B cell (primary cell): ENCODE measurements at regions of chr11 and their contacts with region 1.

Region 1: DNA sequence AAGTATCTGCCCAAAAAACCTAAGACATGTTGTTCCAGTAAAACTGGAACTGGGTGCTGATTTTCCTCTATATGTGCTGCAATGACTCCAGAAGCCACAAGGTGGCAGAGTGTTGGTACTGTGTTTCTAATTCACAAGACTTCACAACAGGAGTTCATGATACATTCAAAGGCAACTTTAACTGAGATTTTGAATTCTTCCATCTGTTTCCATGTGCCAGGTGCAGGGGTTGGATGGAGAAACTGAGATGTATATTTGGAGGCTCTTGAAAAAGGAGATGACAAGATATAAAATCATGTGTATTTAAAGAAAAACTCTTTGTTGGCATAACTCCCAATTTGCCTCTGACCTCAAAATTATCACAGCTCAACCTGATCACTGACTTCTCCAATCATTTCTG is 1098.6 kb upstream of the CCDC90B start:
- DNase-seq: peak; percentile 43
- ATAC-seq: peak; percentile 61
- H3K4me3 ChIP-seq: no peak overlapping the region
- H3K4me3 Mint-ChIP-seq: no peak overlapping the region
- H3K27ac ChIP-seq: no peak overlapping the region
- H3K27ac Mint-ChIP-seq: no peak overlapping the region
- H3K4me1 ChIP-seq: no peaks in the 10 kb centered on the region
- H3K4me1 Mint-ChIP-seq: no peaks in the 10 kb centered on the region
- H3K27me3 ChIP-seq: no peaks in the 10 kb centered on the region
- H3K27me3 Mint-ChIP-seq: peaks cover 3% of the 10 kb centered on the region
- CTCF ChIP-seq: peak; percentile 95

Region 2: DNA sequence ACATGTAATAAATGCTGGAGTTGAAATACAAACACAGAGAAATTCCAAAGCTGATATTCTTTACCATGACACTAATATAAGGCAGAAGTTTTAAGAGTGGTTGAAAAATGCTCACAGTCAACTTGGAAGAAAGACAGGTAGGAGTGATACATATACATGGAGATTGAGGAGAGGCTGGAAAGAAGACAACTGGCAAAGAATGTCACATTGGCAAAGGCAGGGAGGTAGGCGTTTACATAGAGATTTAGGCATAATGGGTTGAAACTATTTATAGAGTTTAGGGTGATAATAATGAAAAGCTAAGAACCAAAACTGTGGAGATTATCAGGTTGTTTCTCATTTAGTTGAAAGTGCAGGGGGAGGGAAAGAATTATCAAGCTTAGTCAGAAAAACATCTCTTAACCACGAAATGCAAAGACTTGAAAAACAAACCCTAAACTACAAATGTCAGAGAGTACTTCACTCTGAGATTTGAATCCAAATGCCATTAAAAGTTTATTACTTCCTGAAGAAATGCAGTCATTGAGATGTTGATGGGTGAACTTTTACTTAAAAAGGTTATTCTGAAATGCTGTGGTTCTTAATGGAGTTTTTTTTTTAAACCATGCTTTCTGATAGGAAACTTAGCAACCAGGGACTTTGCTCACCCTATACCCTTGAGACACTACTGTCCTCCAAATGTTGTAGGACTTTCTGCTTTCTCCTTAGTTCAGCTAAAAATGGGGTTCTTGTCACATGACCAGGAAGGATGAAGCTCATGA is 960.2 kb before region 1 on chr11:
- CTCF ChIA-PET with region 1: no interaction called
- POLR2A ChIA-PET with region 1: no interaction called
- intact Hi-C with region 1: no loop called
- DNase-seq: no peak
- ATAC-seq: no peak
- H3K4me3 ChIP-seq: no peak overlapping the region
- H3K4me3 Mint-ChIP-seq: no peak overlapping the region
- H3K27ac ChIP-seq: no peak overlapping the region
- H3K27ac Mint-ChIP-seq: no peak overlapping the region
- H3K4me1 ChIP-seq: no peaks in the 10 kb centered on the region
- H3K4me1 Mint-ChIP-seq: no peaks in the 10 kb centered on the region
- H3K27me3 ChIP-seq: no peaks in the 10 kb centered on the region
- H3K27me3 Mint-ChIP-seq: peaks cover 15% of the 10 kb centered on the region
- CTCF ChIP-seq: no peak

Region 3: GRCh38 chr11:84396521-84396920 is 11.8 kb after region 1 on chr11:
- CTCF ChIA-PET with region 1: interaction called, 16 read pairs
- POLR2A ChIA-PET with region 1: no interaction called
- intact Hi-C with region 1: no loop called
- DNase-seq: no peak
- ATAC-seq: no peak
- H3K4me3 ChIP-seq: no peak overlapping the region
- H3K4me3 Mint-ChIP-seq: no peak overlapping the region
- H3K27ac ChIP-seq: no peak overlapping the region
- H3K27ac Mint-ChIP-seq: no peak overlapping the region
- H3K4me1 ChIP-seq: no peaks in the 10 kb centered on the region
- H3K4me1 Mint-ChIP-seq: no peaks in the 10 kb centered on the region
- H3K27me3 ChIP-seq: no peaks in the 10 kb centered on the region
- H3K27me3 Mint-ChIP-seq: no peaks in the 10 kb centered on the region
- CTCF ChIP-seq: no peak

Region 4: DNA sequence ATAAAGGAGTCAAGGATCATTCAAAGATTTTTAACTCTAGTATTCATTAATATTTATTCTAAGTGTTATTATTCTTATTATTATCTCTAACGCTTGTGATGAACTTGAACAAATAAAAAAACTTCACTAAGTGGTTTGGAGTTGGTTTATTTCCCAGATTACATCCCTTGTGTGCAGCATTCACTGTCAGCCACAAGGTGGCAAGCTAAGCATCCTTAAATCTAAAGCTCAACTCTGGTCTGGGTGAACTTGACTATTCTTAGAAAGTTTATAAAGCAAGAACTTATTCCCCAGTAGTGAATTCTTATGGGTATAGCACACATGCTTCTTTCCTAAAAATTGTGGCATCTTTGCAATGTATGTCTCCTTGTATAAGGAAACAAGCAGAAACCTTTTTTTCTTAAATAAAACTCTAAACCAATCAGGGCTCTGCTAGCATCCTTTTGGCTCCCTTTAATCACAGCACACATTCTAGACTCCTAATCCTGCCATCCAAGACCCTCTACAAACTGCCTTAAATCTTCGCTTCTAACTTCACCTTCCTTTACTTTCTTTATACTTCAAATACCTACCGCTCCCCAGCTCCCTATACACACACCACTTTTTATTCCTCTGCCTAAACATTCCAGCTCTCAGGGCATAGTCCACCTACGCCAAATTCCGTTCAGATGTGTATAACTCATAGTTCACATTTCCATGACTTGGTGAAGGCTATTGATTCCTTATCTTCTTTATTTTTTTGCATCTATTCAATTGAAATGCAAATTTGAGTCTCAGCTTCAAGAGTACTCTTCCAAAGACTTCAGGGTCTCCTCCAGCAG is 173.6 kb after region 1 on chr11:
- CTCF ChIA-PET with region 1: interaction called, 27 read pairs
- POLR2A ChIA-PET with region 1: no interaction called
- intact Hi-C with region 1: no loop called
- DNase-seq: peak; percentile 48
- ATAC-seq: peak; percentile 54
- H3K4me3 ChIP-seq: no peak overlapping the region
- H3K4me3 Mint-ChIP-seq: no peak overlapping the region
- H3K27ac ChIP-seq: no peak overlapping the region
- H3K27ac Mint-ChIP-seq: no peak overlapping the region
- H3K4me1 ChIP-seq: no peaks in the 10 kb centered on the region
- H3K4me1 Mint-ChIP-seq: peaks cover 3% of the 10 kb centered on the region
- H3K27me3 ChIP-seq: no peaks in the 10 kb centered on the region
- H3K27me3 Mint-ChIP-seq: peaks cover 4% of the 10 kb centered on the region
- CTCF ChIP-seq: peak; percentile 85

Region 5: GRCh38 chr11:84564180-84564866 is 179.6 kb after region 1 on chr11:
- CTCF ChIA-PET with region 1: interaction called, 27 read pairs
- POLR2A ChIA-PET with region 1: no interaction called
- intact Hi-C with region 1: loop called (anchors 1 kb)
- DNase-seq: peak; percentile 59
- ATAC-seq: peak; percentile 45
- H3K4me3 ChIP-seq: no peak overlapping the region
- H3K4me3 Mint-ChIP-seq: no peak overlapping the region
- H3K27ac ChIP-seq: no peak overlapping the region
- H3K27ac Mint-ChIP-seq: no peak overlapping the region
- H3K4me1 ChIP-seq: no peaks in the 10 kb centered on the region
- H3K4me1 Mint-ChIP-seq: no peaks in the 10 kb centered on the region
- H3K27me3 ChIP-seq: no peaks in the 10 kb centered on the region
- H3K27me3 Mint-ChIP-seq: peaks cover 6% of the 10 kb centered on the region
- CTCF ChIP-seq: peak; percentile 97